ENCODE measurements at regions of chr15 and their contacts with region 1.

Region 1: GRCh38 chr15:44501768-44502366 is 35.1 kb upstream of the EIF3J start:
- DNase-seq: no peak
- H3K4me3 ChIP-seq: no peak overlapping the region
- H3K27ac ChIP-seq: peak overlapping the region in 13 of 59 donors; percentile 0 to 44 (median 14)
- H3K27me3 ChIP-seq: no peaks in the 10 kb centered on the region
- CTCF ChIP-seq: peak; percentile 20 to 82 (median 64)

Region 2: GRCh38 chr15:43872416-43873020 is 629.3 kb before region 1 on chr15:
- intact Hi-C with region 1: loop called in 1 of 2 experiments (anchors 10 kb)
- DNase-seq: peak in 8 of 10 donors; percentile 35 to 81 (median 61)
- H3K4me3 ChIP-seq: no peak overlapping the region
- H3K27ac ChIP-seq: peak overlapping the region in 43 of 59 donors; percentile 0 to 75 (median 50)
- H3K27me3 ChIP-seq: no peaks in the 10 kb centered on the region
- CTCF ChIP-seq: peak; percentile 40 to 89 (median 74)

Region 3: DNA sequence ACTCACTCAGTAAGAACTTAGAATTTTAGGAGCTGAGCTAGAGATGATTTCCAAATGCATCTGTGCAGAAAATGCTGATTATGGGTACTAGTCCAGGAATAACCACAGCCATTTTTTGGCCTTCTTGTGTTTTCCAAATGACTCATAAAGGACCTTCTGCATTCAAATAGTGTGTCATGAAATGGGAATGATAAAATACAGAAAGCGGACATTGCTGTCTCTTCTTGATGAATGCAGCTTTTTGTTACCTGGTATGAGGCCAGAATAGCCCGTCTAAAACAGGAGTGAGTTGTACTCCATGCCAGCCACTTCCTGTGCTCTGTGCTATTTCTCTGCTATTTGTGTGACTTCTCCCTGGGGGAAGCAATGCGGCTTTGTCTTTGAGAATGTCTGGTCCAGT is 286.3 kb before region 1 on chr15:
- intact Hi-C with region 1: loop called (anchors 5 to 10 kb)
- DNase-seq: no peak
- H3K4me3 ChIP-seq: no peak overlapping the region
- H3K27ac ChIP-seq: peak overlapping the region in 27 of 59 donors; percentile 1 to 72 (median 21)
- H3K27me3 ChIP-seq: no peaks in the 10 kb centered on the region
- CTCF ChIP-seq: no peak

Region 4: GRCh38 chr15:44222478-44222877 is 279.4 kb before region 1 on chr15:
- intact Hi-C with region 1: loop called (anchors 5 to 10 kb)
- DNase-seq: no peak
- H3K4me3 ChIP-seq: no peak overlapping the region
- H3K27ac ChIP-seq: no peak overlapping the region
- H3K27me3 ChIP-seq: no peaks in the 10 kb centered on the region
- CTCF ChIP-seq: no peak

Region 5: DNA sequence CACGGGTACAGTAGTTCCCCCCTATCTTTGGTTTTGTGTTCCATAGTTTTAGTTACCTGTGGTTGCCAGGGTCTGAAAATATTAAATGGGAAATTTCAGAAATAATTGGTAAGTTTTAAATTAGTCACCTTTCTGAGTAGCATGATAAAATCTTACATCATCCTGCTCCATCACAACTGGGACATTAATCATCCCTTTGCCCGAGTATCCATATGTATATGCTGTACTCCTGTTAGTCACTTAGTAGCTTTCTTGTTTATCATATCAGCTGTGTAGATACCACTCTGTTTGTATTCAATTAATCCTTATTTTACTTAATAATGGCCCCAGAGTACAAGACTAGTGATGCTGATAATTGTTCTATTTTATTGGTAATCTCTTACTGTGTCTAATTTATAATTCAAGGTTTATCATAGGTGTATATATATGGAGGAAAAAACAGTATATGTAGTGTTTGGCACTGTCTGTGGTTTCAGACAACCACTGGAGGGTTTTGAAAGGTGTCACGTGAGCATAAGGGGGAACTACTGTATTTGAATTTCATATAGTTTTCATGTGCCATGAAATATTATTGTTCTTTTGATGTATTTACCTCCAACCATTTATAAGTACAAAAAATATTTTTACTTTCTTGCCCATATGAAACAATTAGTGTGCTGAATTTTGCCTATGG is 33.0 kb before region 1 on chr15:
- intact Hi-C with region 1: no loop called
- DNase-seq: no peak
- H3K4me3 ChIP-seq: no peak overlapping the region
- H3K27ac ChIP-seq: no peak overlapping the region
- H3K27me3 ChIP-seq: no peaks in the 10 kb centered on the region
- CTCF ChIP-seq: no peak

Measured in dorsolateral prefrontal cortex (tissue), 120 donors.